H1 (cell line): ENCODE measurements at regions of chr17 and their contacts with region 1.

Region 1: GRCh38 chr17:44210342-44211192 is 8.9 kb downstream of the UBTF start:
- DNase-seq: peak; percentile 85 to 97
- H3K4me3 ChIP-seq: no peak overlapping the region
- H3K27ac ChIP-seq: peak overlapping the region; percentile 45; the same call in 1 of the 2 replicates
- H3K4me1 ChIP-seq: peaks cover 0 to 11% (median 3%) of the 10 kb centered on the region in 4 experiments; a peak in 5 of 7 replicates
- H3K27me3 ChIP-seq: no peaks in the 10 kb centered on the region
- CTCF ChIP-seq: peak; percentile 82 to 99 (median 95)
- EP300 ChIP-seq: 0 out of 3 replicates have a peak, but pooled peaks of 1 of the 2 experiments have one; percentile 16
- POLR2A ChIP-seq: peak in 1 of 2 experiments; percentile 19; a peak in 1 of 3 replicates
- RAD21 ChIP-seq: peak; percentile 89 to 96

Region 2: DNA sequence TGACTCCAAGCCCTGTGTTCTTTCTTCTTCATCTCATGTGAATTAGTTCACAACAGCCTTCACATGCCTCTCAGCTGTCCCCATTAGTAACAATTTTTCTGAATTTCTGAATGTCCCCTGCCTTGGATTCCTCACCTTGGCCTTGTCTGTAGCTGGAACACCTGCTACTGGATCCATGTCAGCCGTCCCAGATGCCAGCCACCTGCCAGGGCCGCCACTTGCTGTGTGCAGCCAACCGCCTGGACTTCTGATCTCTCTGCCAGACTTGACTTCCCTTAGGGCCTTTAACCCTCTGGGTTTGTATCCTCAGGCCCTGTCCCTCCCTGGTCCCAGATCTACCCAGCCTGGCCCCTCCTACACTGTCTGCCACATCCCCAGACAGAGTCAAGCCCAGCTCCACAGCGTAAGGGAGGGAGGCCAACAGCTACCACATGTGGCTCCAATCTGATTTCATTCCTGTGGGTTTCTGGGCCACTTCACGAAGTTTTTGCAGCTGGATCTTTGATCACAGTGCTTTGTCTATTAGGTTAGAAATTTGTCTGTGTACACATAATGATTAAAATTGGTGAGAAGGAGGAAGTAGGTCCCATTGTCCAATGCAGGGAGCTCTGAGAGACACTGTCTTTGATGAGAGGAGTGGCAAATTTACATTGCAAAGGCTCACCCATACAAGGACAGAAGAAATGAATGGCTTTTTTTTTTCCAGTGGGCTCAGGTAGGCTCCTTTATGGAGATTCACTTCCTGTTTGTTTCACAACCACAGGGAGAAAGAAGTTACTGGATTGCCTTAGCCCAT is 318.5 kb before region 1 on chr17:
- CTCF ChIA-PET with region 1: no interaction called
- POLR2A ChIA-PET with region 1: no interaction called
- DNase-seq: no peak
- H3K4me3 ChIP-seq: peak overlapping the region in 1 of 4 experiments; percentile 8; a peak in 1 of 8 replicates
- H3K27ac ChIP-seq: no peak overlapping the region
- H3K4me1 ChIP-seq: peaks cover 9 to 17% (median 14%) of the 10 kb centered on the region in 4 experiments
- H3K27me3 ChIP-seq: no peaks in the 10 kb centered on the region
- CTCF ChIP-seq: no peak
- EP300 ChIP-seq: no peak
- POLR2A ChIP-seq: no peak
- RAD21 ChIP-seq: no peak

Region 3: GRCh38 chr17:44199553-44200477 is 10.8 kb before region 1 on chr17 and contains the start of gene ATXN7L3:
- CTCF ChIA-PET with region 1: interaction called, 13 read pairs
- POLR2A ChIA-PET with region 1: interaction called, 78 read pairs
- DNase-seq: peak; percentile 92 to 97
- H3K4me3 ChIP-seq: peak within 1 kb of the TSS; percentile 77 to 98 (median 82)
- H3K27ac ChIP-seq: peak within 1 kb of the TSS; percentile 66
- H3K4me1 ChIP-seq: peaks cover 3 to 23% (median 8%) of the 10 kb centered on the region in 4 experiments
- H3K27me3 ChIP-seq: no peaks in the 10 kb centered on the region
- CTCF ChIP-seq: no peak
- EP300 ChIP-seq: no peak
- POLR2A ChIP-seq: peak; percentile 25 to 46; a peak in 2 of 3 replicates
- RAD21 ChIP-seq: no peak
- total RNA-seq, gene ATXN7L3: 103 and 106 TPM in 2 replicates

Region 4: GRCh38 chr17:44236444-44236991 is 26.0 kb after region 1 on chr17:
- CTCF ChIA-PET with region 1: no interaction called
- POLR2A ChIA-PET with region 1: no interaction called
- DNase-seq: no peak
- H3K4me3 ChIP-seq: no peak overlapping the region
- H3K27ac ChIP-seq: no peak overlapping the region
- H3K4me1 ChIP-seq: no peaks in the 10 kb centered on the region
- H3K27me3 ChIP-seq: no peaks in the 10 kb centered on the region
- CTCF ChIP-seq: no peak
- EP300 ChIP-seq: no peak
- POLR2A ChIP-seq: no peak
- RAD21 ChIP-seq: no peak

Region 5: DNA sequence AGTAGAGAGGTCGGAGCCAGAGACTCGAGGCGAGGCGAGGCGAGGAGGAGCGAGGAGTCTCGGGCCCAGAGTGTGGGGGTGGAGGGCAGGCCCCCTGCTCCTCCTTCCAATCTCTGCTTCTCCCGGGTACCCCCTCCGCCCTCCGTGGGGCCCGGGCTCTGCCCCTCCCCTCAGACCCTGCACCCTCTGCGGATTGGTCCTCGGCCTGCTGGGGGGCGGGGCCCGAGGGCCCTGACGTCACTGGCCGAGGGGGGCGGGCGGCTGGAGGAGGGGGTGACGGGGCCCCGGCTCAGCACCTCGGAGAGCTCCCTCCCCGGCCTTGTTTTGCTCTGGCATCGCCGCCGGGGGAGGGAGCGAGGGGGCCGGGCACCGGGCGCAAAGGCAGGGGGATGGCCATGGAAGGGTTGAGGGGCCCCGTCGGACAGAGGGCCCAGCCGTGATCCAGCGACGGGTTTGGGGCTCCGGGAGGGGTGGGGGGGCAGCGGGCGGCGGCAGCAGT is 97.8 kb after region 1 on chr17 and contains the start of gene RUNDC3A:
- CTCF ChIA-PET with region 1: interaction called, 14 read pairs
- POLR2A ChIA-PET with region 1: interaction called, 135 read pairs
- DNase-seq: peak in 1 of 2 experiments; percentile 99
- H3K4me3 ChIP-seq: peak within 1 kb of the TSS; percentile 43 to 67 (median 54)
- H3K27ac ChIP-seq: no peak within 1 kb of the TSS
- H3K4me1 ChIP-seq: peaks cover 7 to 38% (median 26%) of the 10 kb centered on the region in 4 experiments
- H3K27me3 ChIP-seq: no peaks in the 10 kb centered on the region; a peak in 2 of 7 replicates
- CTCF ChIP-seq: no peak
- EP300 ChIP-seq: no peak
- POLR2A ChIP-seq: peak in 1 of 2 experiments; percentile 46; a peak in 1 of 3 replicates
- RAD21 ChIP-seq: no peak
- total RNA-seq, gene RUNDC3A: 6.1 and 6.4 TPM in 2 replicates

Region 6: GRCh38 chr17:44324571-44325275 is 114.2 kb after region 1 on chr17 and contains the start of gene SLC25A39:
- CTCF ChIA-PET with region 1: interaction called, 158 read pairs
- POLR2A ChIA-PET with region 1: interaction called, 135 read pairs
- DNase-seq: peak in 1 of 2 experiments; percentile 98
- H3K4me3 ChIP-seq: peak within 1 kb of the TSS; percentile 74 to 92 (median 84)
- H3K27ac ChIP-seq: 0 out of 2 replicates have a peak within 1 kb of the TSS, but pooled peaks have one; percentile 29
- H3K4me1 ChIP-seq: peaks cover 0 to 11% (median 6%) of the 10 kb centered on the region in 4 experiments; a peak in 5 of 7 replicates
- H3K27me3 ChIP-seq: peaks cover 0 to 6% (median 0%) of the 10 kb centered on the region in 4 experiments; a peak in 5 of 7 replicates
- CTCF ChIP-seq: no peak
- EP300 ChIP-seq: no peak
- POLR2A ChIP-seq: peak in 1 of 2 experiments; percentile 56; a peak in 1 of 3 replicates
- RAD21 ChIP-seq: no peak; a peak in 1 of 4 replicates
- total RNA-seq, gene SLC25A39: 189 and 200 TPM in 2 replicates

Region 7: GRCh38 chr17:44344939-44345453 is 134.4 kb after region 1 on chr17 and contains the start of gene GRN:
- CTCF ChIA-PET with region 1: interaction called, 31 read pairs
- POLR2A ChIA-PET with region 1: interaction called, 21 read pairs
- DNase-seq: peak; percentile 89 to 92
- H3K4me3 ChIP-seq: peak within 1 kb of the TSS; percentile 52 to 95 (median 78)
- H3K27ac ChIP-seq: 0 out of 2 replicates have a peak within 1 kb of the TSS, but pooled peaks have one; percentile 16
- H3K4me1 ChIP-seq: peaks cover 0 to 2% (median 0%) of the 10 kb centered on the region in 4 experiments; a peak in 3 of 7 replicates
- H3K27me3 ChIP-seq: peaks cover 0 to 3% (median 0%) of the 10 kb centered on the region in 4 experiments; a peak in 3 of 7 replicates
- CTCF ChIP-seq: no peak; a peak in 1 of 4 replicates
- EP300 ChIP-seq: peak in 1 of 2 experiments; percentile 67; a peak in 1 of 3 replicates
- POLR2A ChIP-seq: peak; percentile 76 to 86
- RAD21 ChIP-seq: no peak
- total RNA-seq, gene GRN: 108 and 117 TPM in 2 replicates

Region 8: DNA sequence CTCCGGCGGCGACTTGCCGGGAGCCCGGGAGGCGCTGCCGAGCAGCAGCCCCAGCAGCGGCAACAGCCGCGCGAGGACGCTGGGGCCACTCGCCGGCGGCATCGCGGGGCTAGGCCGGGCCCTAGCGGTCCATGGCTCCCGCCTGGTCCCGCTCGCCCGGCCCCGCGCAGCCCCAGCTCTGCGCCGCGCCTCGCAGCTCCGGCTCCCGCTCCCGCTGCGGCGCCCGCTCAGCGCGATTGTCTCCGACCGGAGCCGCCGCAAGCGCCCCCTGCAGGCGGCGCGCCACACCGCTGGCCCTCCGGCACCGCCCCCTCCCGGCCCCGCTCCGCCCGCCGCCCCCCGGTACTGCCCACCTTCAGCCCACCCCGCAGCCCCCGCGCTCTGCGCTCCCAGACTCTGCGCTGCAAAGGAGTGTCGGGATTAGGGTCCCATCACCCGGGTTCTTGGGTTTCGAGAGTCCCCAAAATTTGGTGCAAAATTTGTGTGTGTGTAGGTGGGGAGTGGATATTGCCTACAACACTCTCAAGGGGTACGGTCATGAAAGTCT is 153.1 kb after region 1 on chr17 and contains the start of gene FAM171A2:
- CTCF ChIA-PET with region 1: interaction called, 10 read pairs
- POLR2A ChIA-PET with region 1: interaction called, 3 read pairs
- DNase-seq: peak in 1 of 2 experiments; percentile 90
- H3K4me3 ChIP-seq: peak within 1 kb of the TSS; percentile 71 to 100 (median 76)
- H3K27ac ChIP-seq: peak within 1 kb of the TSS; percentile 30; the same call in 1 of the 2 replicates
- H3K4me1 ChIP-seq: peaks cover 9 to 23% (median 18%) of the 10 kb centered on the region in 4 experiments
- H3K27me3 ChIP-seq: no peaks in the 10 kb centered on the region
- CTCF ChIP-seq: peak; percentile 60 to 87 (median 84)
- EP300 ChIP-seq: no peak
- POLR2A ChIP-seq: peak; percentile 43 to 44; a peak in 2 of 3 replicates
- RAD21 ChIP-seq: peak in 1 of 2 experiments; percentile 34; a peak in 2 of 4 replicates
- total RNA-seq, gene FAM171A2: 23.9 and 24.1 TPM in 2 replicates